Gastrocnemius medialis (tissue), 4 donors: ENCODE measurements at regions of chr1 and their contacts with region 1.

Region 1: GRCh38 chr1:9555942-9556341 is 16.7 kb downstream of the SLC25A33 start:
- DNase-seq: peak; percentile 84 to 92
- ATAC-seq: peak; percentile 87 to 88
- H3K4me3 ChIP-seq: peak overlapping the region; percentile 25 to 43 (median 38)
- H3K27ac ChIP-seq: peak overlapping the region; percentile 94 to 100 (median 96)
- H3K4me1 ChIP-seq: peaks cover 67 to 78% of the 10 kb centered on the region in 2 donors
- H3K27me3 ChIP-seq: no peaks in the 10 kb centered on the region
- CTCF ChIP-seq: no peak
- POLR2A ChIP-seq: peak; percentile 60 to 76

Region 2: DNA sequence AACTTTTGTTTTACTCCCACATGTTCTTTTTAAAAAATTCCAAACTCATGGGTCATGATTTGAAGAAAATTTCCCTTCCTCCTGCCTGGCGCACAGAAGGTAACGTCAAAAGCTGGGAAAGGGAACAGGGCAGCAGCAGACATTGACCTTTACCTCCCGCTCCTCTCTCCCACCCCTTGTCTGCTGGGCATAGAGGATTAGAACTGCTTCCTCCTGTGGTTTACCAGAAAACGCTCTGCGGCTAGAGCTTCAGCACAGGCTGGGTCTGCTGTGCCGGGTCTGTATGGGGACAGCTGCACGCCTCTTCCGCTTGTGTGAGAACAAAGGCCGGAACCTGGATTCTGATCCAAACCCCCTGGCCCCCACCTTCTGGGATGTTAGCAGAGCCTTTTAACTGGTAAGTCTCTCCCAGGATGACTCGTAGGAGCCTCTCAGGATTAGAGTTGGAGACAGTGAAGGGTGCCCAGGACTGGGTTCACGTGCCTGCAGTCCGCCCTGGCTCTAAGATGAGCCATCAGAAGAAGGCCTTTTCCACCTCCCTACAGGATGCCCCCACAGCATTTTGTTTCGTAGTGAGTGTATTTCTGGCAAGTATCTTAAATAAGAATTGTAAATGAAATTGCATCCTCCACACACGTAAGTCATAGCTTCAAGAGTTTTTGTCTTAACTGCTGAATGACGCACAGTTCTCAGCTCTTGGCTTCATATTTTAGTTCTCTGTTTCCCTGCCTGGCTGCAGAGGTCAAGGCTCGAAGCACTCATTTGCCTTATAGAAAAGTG is 316.1 kb before region 1 on chr1:
- in situ Hi-C with region 1: no loop called
- intact Hi-C with region 1: loop called (anchors 5 kb)
- DNase-seq: peak in 1 of 2 donors; percentile 77
- ATAC-seq: peak; percentile 2 to 3
- H3K4me3 ChIP-seq: peak overlapping the region; percentile 0 to 34 (median 32)
- H3K27ac ChIP-seq: peak overlapping the region; percentile 86 to 99 (median 92)
- H3K4me1 ChIP-seq: peaks cover 90 to 92% of the 10 kb centered on the region in 2 donors
- H3K27me3 ChIP-seq: no peaks in the 10 kb centered on the region
- CTCF ChIP-seq: no peak
- POLR2A ChIP-seq: peak; percentile 45 to 56

Region 3: GRCh38 chr1:9518454-9518998 is 37.4 kb before region 1 on chr1:
- in situ Hi-C with region 1: no loop called
- intact Hi-C with region 1: loop called (anchors 1 kb)
- DNase-seq: peak; percentile 96 to 99
- ATAC-seq: peak; percentile 81 to 83
- H3K4me3 ChIP-seq: peak overlapping the region in 1 of 4 donors; percentile 14
- H3K27ac ChIP-seq: peak overlapping the region; percentile 89 to 99 (median 94)
- H3K4me1 ChIP-seq: peaks cover 17 to 21% of the 10 kb centered on the region in 2 donors
- H3K27me3 ChIP-seq: no peaks in the 10 kb centered on the region
- CTCF ChIP-seq: no peak
- POLR2A ChIP-seq: peak; percentile 56 to 73